Mucosa of descending colon (tissue), 3 donors: ENCODE measurements at regions of chr1 and their contacts with region 1.

Region 1: DNA sequence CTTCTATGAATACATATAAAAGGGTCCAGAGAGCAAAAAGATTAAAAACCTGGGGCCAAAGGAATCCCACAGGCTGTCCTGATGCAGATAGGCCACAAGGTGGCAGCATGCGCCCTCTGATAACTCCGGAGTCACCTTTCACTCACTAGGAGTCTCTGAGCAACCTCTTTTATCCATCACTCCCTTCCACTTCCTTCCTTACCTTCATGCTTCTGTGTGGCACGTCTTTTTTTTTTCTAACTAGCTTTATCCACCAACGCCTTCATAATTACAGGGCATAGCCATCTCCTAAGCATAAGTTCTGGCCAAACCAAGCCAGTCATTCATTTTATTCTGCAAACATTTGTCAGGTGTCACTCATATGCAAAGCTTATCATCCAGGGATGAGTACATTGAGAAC is 3.9 kb upstream of the PGLYRP4 start:
- DNase-seq: peak; percentile 65 to 70 (median 66)
- ATAC-seq: peak; percentile 84
- H3K4me3 ChIP-seq: no peak overlapping the region
- H3K4me1 ChIP-seq: no peaks in the 10 kb centered on the region
- CTCF ChIP-seq: peak; percentile 83

Region 2: GRCh38 chr1:153238536-153238935 is 114.0 kb before region 1 on chr1:
- intact Hi-C with region 1: no loop called
- DNase-seq: no peak
- ATAC-seq: peak; percentile 57
- H3K4me3 ChIP-seq: no peak overlapping the region
- H3K4me1 ChIP-seq: no peaks in the 10 kb centered on the region
- CTCF ChIP-seq: no peak

Region 3: DNA sequence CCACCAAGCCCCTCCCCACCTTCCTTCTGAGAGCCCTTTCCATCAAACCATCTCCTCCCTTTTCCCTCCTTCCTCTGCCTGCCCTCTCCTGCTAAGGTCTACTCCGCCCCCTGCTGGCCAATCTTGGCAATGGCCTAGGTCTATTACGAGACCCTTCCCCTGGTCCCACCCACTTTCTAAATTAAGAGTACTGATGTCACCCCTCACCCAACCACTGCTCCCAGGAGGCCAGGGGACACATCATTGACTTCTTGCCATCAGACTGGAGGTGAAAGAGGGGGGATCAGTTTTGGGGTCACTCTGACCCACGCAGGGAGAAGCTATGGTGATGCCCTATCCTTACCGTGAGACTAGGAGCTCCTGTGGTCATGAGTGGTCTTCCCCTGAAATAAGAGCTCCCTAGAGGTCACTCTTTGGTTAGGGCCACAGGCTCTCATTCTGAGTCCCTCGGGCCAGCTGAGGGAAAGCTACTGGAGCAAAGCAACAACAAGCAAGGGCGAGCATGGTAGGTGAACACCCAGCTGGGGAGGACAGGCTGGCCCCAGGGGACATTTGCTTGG is 142.5 kb after region 1 on chr1:
- intact Hi-C with region 1: loop called (anchors 2 to 5 kb)
- DNase-seq: peak; percentile 54 to 83 (median 81)
- ATAC-seq: peak; percentile 69
- H3K4me3 ChIP-seq: no peak overlapping the region
- H3K4me1 ChIP-seq: no peaks in the 10 kb centered on the region
- CTCF ChIP-seq: peak; percentile 85

Region 4: DNA sequence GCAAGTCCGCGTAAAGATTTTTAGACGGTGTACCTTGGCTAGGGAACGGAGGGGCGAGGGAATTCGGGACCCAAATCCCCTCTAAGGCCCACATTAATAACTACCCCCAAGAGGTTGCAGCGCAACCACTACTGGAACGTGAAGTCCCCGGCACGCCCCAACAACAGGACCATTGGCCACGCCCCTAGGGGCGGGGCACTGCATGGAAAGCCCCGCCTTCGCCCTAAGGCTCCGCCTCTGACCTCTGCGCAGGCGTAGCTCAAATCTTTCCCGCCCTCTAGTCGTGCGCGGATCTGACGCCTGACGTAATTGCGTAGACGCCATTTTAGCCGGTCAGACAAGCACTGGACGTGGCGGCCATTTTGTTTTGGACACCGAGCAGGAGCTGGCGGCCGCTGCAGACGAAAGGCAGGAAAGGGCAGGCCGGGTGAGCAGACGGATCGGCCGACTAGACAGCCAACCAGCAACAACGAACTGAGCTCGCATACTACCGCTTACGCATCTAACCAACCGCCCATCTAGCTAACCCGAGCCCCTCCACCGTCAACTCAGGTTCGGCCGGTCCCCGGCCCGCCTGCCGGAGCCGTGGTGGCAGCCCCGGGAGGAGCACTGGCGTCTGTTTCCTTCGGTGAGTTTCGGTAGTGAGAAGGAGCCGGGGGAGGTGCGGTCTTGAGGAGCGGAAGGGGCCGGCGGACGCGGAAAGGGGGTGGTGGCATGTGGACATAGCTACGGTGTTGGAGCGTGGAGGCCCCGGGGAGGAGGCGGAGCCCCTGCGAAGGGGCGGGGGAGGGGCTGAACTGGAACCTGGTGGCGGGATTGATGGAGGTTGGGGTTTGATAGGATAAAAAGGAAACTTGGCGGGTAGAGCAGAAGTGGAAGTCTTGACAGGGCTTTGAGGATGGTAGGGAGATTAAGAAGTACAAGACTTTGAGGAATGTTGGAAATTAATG is 281.5 kb after region 1 on chr1 and contains the start of gene CHTOP:
- intact Hi-C with region 1: no loop called
- DNase-seq: peak; percentile 98 to 99 (median 99)
- ATAC-seq: peak; percentile 95
- H3K4me3 ChIP-seq: peak within 1 kb of the TSS; percentile 78
- H3K4me1 ChIP-seq: peaks cover 18% of the 10 kb centered on the region
- CTCF ChIP-seq: no peak
- total RNA-seq, gene CHTOP: 64.2 to 71.8 (median 71.6) TPM